RWPE1 (cell line): ENCODE measurements at regions of chr11 and their contacts with region 1.

Region 1: DNA sequence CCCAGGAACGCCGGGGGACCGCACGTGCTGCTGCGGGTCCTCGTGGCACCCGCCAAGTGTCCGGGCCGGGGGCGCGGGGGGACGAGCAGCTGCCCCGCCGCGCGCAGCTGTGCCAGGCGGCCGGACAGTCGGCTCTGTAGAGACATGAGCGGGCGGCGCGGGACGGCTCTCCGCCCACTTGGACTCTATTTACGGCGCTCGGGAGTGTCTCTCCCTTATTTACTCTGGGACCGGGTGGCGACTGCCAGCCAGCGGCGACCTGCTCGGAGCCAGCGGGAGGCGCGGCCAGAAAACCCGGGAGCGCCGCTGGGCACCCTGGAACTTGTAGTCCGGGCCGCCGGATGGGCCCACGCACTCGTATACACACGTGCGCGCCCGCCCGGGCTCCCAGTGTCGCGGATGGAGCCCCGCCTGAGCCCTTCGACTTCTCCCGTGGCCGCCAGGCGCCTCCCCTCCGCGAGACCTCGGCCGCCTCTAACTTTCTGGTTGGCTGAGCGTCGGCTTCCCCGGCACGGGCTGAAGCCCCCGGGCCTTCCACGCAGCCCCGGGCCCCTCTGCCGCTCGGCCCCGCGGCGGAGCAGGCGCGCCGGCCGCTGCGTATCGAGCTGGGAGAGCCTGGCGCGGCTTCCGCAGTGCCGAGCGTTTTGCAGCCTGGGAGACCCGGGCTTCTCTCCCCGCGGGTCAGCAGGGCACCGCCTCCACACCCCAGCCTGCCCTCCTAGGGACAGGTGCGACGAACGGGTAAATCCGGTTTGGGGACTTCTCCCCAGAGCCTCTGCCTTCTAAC is at the start of gene MACROD1:
- DNase-seq: peak; percentile 79
- H3K27ac ChIP-seq: peak within 1 kb of the TSS; percentile 82
- CTCF ChIP-seq: no peak

Region 2: DNA sequence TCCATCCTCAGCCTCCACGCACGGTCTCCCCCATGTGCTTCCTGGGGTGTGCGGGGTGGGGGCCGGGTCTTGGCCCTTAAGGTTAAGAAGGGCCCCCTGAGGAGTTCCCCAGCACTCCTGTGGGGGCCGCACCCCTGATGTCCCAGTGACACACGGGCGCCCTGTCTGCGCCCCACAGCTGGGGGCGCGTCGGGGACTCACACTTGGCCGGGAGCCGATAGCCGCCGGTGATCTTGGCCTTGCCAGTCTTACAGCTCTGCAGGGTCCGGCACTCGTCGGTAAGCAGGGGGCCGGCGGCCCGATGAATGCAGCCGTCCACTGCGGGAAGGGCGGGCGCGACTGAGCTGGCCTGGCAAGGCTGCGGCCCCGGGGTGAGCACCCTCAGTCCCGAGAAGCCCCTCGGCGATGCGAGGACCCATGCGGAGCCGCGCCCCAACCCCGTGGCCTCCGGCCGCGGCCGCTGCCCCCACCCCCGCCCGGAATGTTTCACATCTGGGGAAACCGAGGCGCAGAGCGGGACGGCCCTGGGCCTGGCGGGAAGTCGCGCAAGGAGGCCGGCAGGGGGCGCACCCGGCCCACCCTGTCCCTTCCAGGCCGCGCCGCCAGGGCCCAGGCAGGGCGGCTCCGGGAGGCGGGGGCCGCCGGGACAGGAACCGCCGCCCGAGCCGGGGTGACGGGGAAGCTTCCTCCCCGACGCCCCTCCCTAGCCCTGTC is 165.9 kb before region 1 on chr11:
- CTCF ChIA-PET with region 1: interaction called, 11 read pairs
- POLR2A ChIA-PET with region 1: no interaction called
- DNase-seq: peak; percentile 64
- H3K27ac ChIP-seq: peak overlapping the region; percentile 85
- CTCF ChIP-seq: peak; percentile 86

Region 3: DNA sequence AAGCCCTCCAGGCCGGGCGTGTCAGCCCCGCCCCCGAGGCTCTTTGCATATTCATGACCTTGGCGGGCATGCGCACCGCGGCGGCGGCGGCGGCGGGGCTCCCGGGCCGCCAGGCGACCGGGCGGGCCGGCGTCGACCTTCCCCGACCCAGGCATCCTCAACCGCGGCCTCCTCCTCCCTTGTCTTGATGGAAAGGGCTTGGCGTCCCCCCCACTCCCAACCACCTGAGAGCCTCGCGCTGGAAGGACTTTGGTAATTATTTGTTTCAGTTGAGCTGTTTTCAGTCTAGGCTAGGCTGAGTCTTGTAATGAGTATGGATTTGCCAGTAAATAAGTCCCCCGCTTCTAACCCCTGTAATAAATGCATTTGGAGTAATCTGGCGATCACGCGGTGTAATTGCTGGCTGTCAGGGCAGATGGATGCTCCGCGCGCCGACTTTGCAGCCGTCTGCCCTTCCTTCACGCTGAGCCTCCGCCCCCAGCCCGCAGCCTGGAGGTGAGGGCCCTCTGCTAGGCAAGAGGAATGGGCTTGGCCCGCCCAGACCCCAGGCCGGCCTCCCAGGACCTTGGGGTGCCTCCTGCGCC is 105.1 kb before region 1 on chr11:
- CTCF ChIA-PET with region 1: no interaction called
- POLR2A ChIA-PET with region 1: no interaction called
- DNase-seq: no peak
- H3K27ac ChIP-seq: no peak overlapping the region
- CTCF ChIP-seq: no peak

Region 4: GRCh38 chr11:64074239-64074638 is 91.8 kb before region 1 on chr11:
- CTCF ChIA-PET with region 1: no interaction called
- POLR2A ChIA-PET with region 1: no interaction called
- DNase-seq: peak; percentile 56
- H3K27ac ChIP-seq: peak overlapping the region; percentile 16
- CTCF ChIP-seq: no peak

Region 5: DNA sequence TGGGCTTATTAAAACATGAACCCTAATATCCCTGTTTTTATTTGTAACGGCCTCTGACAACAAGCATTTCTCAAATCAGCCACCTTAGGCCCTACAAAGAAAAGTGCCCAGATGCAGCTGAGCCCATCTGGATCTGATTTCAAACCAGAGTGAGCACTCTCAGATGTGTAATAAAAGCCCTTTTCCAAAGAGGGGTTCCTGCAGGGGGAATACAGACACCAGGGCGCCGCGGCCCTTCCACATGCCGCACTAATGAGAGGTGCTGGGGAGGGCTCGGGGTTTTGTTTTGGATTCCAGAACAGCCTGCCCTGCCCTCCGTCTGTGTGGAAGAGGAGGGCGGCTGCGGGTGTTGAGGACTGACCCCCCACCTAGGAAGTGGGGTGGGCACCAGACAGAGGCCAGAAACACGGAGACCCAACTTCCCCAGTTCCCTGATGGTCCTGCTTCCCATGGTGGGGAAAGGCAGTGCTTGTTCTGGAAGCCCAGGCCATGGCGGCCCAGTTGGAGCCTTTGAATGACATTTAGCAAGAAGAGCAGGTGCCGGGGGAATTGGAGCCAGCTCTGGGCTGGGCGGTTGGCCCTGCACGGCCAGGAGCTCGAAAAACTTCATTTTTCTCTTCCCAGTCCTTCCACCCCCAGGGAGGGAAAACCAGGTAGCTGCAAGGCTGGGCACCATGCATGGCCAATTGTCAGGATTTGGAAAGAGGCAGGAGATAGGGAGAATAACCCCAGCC is 63.9 kb before region 1 on chr11:
- CTCF ChIA-PET with region 1: no interaction called
- POLR2A ChIA-PET with region 1: no interaction called
- DNase-seq: no peak
- H3K27ac ChIP-seq: no peak overlapping the region
- CTCF ChIP-seq: no peak

Region 6: DNA sequence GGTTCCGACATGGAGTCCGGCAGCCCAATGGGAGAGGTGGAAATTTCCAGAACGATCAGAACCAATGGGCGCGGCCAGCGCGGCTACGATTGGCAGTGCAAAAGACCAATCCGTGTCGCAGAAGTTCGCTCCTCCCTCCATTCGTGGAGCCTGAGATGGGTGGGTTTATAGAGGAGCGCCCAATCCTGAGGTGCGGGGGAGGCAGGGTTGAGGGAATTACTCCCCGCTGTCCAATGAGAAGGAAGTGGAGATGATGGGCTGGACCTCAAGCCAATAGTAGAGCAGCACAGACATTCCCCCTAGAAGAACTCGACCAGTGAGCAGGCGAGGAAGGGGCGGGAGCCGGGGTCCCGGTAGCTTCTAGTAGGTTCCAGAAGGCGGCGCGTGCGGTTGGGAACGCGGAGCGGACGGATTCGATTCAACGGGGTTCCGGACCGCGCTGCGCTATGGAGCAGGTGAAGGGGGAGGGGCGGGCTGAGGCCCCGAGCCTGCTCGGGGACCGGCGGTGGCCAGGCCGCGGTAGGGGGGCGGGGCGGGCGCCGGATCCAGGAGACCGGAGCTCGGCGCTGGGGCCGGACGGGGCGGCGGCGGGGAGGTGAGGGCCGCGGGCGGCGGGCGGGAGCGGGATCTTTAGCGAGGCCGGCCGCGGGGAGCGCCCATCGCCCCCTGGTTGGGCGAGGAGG is 19.9 kb after region 1 on chr11 and contains the start of gene STIP1:
- CTCF ChIA-PET with region 1: interaction called, 4 read pairs
- POLR2A ChIA-PET with region 1: interaction called, 12 read pairs
- DNase-seq: peak; percentile 99
- H3K27ac ChIP-seq: no peak within 1 kb of the TSS
- CTCF ChIP-seq: 0 out of 2 replicates have a peak, but pooled peaks have one; percentile 2